Activated B cell treated with CpG ODN at 0.5 μM for 24 hours (primary cell): ENCODE measurements at regions of chr14 and their contacts with region 1.

Region 1: GRCh38 chr14:70640938-70641547 is 673 bp upstream of the TTC9 start:
- DNase-seq: peak; percentile 51
- ATAC-seq: peak; percentile 64
- H3K4me3 Mint-ChIP-seq: peak overlapping the region; percentile 97
- H3K27ac Mint-ChIP-seq: peak overlapping the region; percentile 97
- H3K4me1 Mint-ChIP-seq: peaks cover 70% of the 10 kb centered on the region
- H3K27me3 Mint-ChIP-seq: no peaks in the 10 kb centered on the region
- CTCF ChIP-seq: no peak

Region 2: GRCh38 chr14:70213721-70214282 is 427.2 kb before region 1 on chr14:
- CTCF ChIA-PET with region 1: no interaction called
- POLR2A ChIA-PET with region 1: no interaction called
- intact Hi-C with region 1: no loop called
- DNase-seq: no peak
- ATAC-seq: no peak
- H3K4me3 Mint-ChIP-seq: no peak overlapping the region
- H3K27ac Mint-ChIP-seq: no peak overlapping the region
- H3K4me1 Mint-ChIP-seq: no peaks in the 10 kb centered on the region
- H3K27me3 Mint-ChIP-seq: peaks cover 7% of the 10 kb centered on the region
- CTCF ChIP-seq: no peak

Region 3: GRCh38 chr14:70600382-70601157 is 40.5 kb before region 1 on chr14 and contains the start of gene MED6:
- CTCF ChIA-PET with region 1: interaction called, 3 read pairs
- POLR2A ChIA-PET with region 1: interaction called, 15 read pairs
- intact Hi-C with region 1: loop called (anchors 1 kb)
- DNase-seq: peak; percentile 77
- ATAC-seq: peak; percentile 99
- H3K4me3 Mint-ChIP-seq: peak within 1 kb of the TSS; percentile 99
- H3K27ac Mint-ChIP-seq: peak within 1 kb of the TSS; percentile 94
- H3K4me1 Mint-ChIP-seq: peaks cover 43% of the 10 kb centered on the region
- H3K27me3 Mint-ChIP-seq: no peaks in the 10 kb centered on the region
- CTCF ChIP-seq: no peak
- total RNA-seq, gene MED6: 50.5 and 57.0 TPM in 2 replicates

Region 4: DNA sequence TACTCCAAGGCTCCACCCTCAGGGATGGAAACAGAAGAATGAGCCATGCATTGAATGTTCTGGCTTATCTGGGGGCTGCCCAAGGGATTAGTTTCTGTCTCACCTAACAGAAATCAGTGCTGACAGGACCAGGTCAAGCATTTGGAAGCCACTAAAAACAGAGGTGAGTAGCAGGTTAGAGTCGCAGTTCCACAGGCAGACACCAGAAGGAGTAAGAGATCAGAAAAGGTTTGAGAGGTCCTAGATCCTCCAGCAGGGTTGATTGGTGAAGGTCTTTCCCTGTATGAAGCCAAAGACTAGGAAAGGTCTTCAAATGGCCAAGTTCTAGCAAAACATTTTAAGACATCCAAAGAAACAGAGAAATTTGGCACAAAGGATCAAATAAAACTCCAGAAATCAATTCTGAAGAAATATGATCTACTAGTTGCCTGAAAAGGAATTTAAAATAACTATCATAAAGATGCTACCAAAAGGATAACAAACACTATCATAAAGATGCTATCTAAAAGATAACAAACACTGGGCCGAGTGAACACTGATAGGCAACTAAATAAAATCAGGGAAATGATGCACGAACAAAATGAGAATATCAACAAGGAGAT is 18.8 kb before region 1 on chr14:
- CTCF ChIA-PET with region 1: interaction called, 6 read pairs
- POLR2A ChIA-PET with region 1: interaction called, 6 read pairs
- intact Hi-C with region 1: loop called (anchors 1 kb)
- DNase-seq: no peak
- ATAC-seq: peak; percentile 95
- H3K4me3 Mint-ChIP-seq: no peak overlapping the region
- H3K27ac Mint-ChIP-seq: no peak overlapping the region
- H3K4me1 Mint-ChIP-seq: peaks cover 19% of the 10 kb centered on the region
- H3K27me3 Mint-ChIP-seq: no peaks in the 10 kb centered on the region
- CTCF ChIP-seq: peak; percentile 74

Region 5: DNA sequence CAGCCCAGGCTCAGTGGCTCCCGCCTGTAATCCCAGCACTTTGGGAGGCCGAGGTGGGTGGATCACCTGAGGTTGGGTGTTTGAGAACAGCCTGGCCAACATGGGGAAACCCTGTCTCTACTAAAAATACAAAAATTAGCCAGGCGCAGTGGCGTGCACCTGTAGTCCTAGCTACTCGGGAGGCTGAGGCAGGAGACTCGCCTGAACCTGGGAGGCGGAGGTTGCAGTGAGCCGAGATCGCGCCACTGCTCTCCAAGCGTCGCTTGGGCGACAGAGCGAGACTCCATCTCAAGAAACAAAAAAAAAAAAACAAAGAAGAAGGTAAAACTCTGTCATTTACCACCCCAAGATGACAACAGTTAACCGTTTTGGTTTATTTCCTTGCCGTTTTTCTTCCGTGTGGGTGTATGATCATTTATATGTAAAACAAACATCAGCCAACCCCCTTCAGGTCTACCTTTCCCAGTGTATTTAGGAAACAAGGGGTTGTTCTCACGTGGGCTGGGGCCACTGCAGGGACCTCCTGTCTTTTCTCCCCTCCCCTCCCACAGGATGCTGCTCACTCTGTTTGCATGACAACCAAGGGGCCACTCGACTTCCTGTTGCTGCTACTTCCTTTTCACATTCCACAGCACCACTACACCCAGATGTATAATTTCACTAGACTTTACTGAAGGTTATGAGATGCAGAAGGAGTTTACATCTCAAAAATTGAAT is 14.2 kb after region 1 on chr14:
- CTCF ChIA-PET with region 1: interaction called, 5 read pairs
- POLR2A ChIA-PET with region 1: interaction called, 172 read pairs
- intact Hi-C with region 1: loop called (anchors 1 kb)
- DNase-seq: peak; percentile 48
- ATAC-seq: peak; percentile 79
- H3K4me3 Mint-ChIP-seq: peak overlapping the region; percentile 80
- H3K27ac Mint-ChIP-seq: peak overlapping the region; percentile 98
- H3K4me1 Mint-ChIP-seq: peaks cover 83% of the 10 kb centered on the region
- H3K27me3 Mint-ChIP-seq: no peaks in the 10 kb centered on the region
- CTCF ChIP-seq: no peak

Region 6: DNA sequence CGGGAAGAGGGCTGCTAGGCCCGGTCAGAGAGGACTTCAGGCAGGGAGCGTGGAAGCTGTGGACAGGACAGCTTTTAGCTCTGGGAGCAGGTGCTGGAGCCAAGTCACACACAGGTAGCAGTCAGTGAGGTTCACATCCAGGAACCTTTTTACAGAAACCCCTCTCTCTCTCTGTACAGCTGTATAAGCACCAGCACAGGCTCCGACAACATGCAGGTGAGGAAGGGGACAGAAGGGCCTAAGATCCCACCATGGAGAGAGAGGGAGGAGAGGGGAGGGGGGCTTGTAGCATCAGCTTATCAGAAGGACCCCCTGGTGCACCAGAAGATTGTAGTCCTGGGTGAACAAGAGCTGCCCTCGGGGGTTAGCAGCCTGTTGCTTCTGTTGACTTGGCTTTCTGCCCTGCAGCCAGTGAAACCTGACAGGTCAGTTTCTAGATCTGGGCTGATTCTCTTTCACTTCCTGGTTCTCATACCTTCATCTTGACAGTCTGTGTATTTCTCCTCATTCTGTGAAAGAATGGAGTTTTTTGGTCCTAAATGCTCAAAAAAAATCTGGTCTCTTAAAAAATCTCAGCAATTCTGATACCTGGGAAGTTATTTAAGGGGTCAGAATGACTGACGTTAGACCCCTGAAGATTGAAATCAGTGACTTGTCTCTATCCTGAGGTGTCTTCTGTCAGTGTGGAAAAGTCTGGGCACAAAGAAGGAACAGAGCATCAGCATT is 24.3 kb after region 1 on chr14:
- CTCF ChIA-PET with region 1: interaction called, 4 read pairs
- POLR2A ChIA-PET with region 1: interaction called, 172 read pairs
- intact Hi-C with region 1: loop called (anchors 1 kb)
- DNase-seq: peak; percentile 40
- ATAC-seq: peak; percentile 62
- H3K4me3 Mint-ChIP-seq: peak overlapping the region; percentile 66
- H3K27ac Mint-ChIP-seq: peak overlapping the region; percentile 93
- H3K4me1 Mint-ChIP-seq: peaks cover 97% of the 10 kb centered on the region
- H3K27me3 Mint-ChIP-seq: no peaks in the 10 kb centered on the region
- CTCF ChIP-seq: no peak

Region 7: DNA sequence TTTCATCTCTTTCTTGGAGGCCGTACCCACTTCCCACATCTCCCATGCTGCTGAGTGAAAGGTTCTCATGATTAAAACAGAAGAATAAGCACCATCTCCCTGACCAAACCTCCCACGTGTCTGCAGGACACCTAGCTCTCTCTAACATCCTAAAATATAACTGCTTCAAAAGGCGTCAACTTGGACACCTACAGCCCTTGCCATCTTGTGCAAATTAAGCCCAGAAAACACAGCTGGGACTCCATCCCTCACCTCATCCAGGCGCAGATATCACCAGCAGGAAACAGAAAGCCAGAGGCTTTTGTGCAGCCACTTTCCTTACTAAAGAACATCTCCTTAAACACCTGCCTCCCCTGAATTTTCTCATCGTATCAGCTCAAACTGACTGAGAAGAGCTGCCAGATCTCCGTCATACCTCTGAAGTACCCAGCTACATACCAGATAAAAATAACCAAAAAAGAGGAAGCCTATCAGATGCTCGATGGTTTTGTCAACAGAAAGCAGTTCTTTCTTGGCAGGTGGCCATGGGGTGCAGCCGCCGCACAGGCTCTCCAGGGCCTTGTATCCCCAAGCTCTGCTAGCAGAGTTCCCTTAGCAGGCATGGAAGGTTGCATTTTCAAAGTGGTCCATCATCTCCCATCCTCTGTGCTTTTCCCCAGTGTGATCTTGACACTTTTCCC is 139.5 kb after region 1 on chr14:
- CTCF ChIA-PET with region 1: no interaction called
- POLR2A ChIA-PET with region 1: interaction called, 11 read pairs
- intact Hi-C with region 1: no loop called
- DNase-seq: peak; percentile 26
- ATAC-seq: peak; percentile 93
- H3K4me3 Mint-ChIP-seq: peak overlapping the region; percentile 68
- H3K27ac Mint-ChIP-seq: peak overlapping the region; percentile 90
- H3K4me1 Mint-ChIP-seq: peaks cover 59% of the 10 kb centered on the region
- H3K27me3 Mint-ChIP-seq: no peaks in the 10 kb centered on the region
- CTCF ChIP-seq: no peak